CD8-positive, alpha-beta T cell (primary cell): ENCODE measurements at regions of chr4 and their contacts with region 1.

Region 1: GRCh38 chr4:103091601-103092223 is 7.9 kb downstream of the BDH2 start:
- DNase-seq: peak in 6 of 9 experiments; percentile 9 to 80 (median 47)
- ATAC-seq: peak; percentile 78
- H3K4me3 ChIP-seq: no peak overlapping the region
- H3K4me3 Mint-ChIP-seq: no peak overlapping the region
- H3K27ac ChIP-seq: no peak overlapping the region
- H3K27ac Mint-ChIP-seq: no peak overlapping the region
- H3K4me1 ChIP-seq: no peaks in the 10 kb centered on the region
- H3K4me1 Mint-ChIP-seq: peaks cover 18% of the 10 kb centered on the region
- H3K27me3 ChIP-seq: no peaks in the 10 kb centered on the region
- H3K27me3 Mint-ChIP-seq: no peaks in the 10 kb centered on the region
- CTCF ChIP-seq: peak; percentile 71

Region 2: GRCh38 chr4:102449751-102450352 is 641.9 kb before region 1 on chr4:
- CTCF ChIA-PET with region 1: interaction called, 7 read pairs
- POLR2A ChIA-PET with region 1: no interaction called
- intact Hi-C with region 1: loop called (anchors 5 kb)
- DNase-seq: peak; percentile 21 to 82 (median 48)
- ATAC-seq: peak; percentile 89
- H3K4me3 ChIP-seq: no peak overlapping the region
- H3K4me3 Mint-ChIP-seq: no peak overlapping the region
- H3K27ac ChIP-seq: no peak overlapping the region
- H3K27ac Mint-ChIP-seq: no peak overlapping the region
- H3K4me1 ChIP-seq: no peaks in the 10 kb centered on the region
- H3K4me1 Mint-ChIP-seq: peaks cover 10% of the 10 kb centered on the region
- H3K27me3 ChIP-seq: no peaks in the 10 kb centered on the region
- H3K27me3 Mint-ChIP-seq: no peaks in the 10 kb centered on the region
- CTCF ChIP-seq: peak; percentile 83

Region 3: GRCh38 chr4:103046416-103047290 is 45.1 kb before region 1 on chr4:
- CTCF ChIA-PET with region 1: interaction called, 58 read pairs
- POLR2A ChIA-PET with region 1: no interaction called
- intact Hi-C with region 1: loop called (anchors 1 kb)
- DNase-seq: peak in 7 of 9 experiments; percentile 2 to 71 (median 40)
- ATAC-seq: peak; percentile 98
- H3K4me3 ChIP-seq: no peak overlapping the region
- H3K4me3 Mint-ChIP-seq: no peak overlapping the region
- H3K27ac ChIP-seq: no peak overlapping the region
- H3K27ac Mint-ChIP-seq: no peak overlapping the region
- H3K4me1 ChIP-seq: no peaks in the 10 kb centered on the region
- H3K4me1 Mint-ChIP-seq: no peaks in the 10 kb centered on the region
- H3K27me3 ChIP-seq: no peaks in the 10 kb centered on the region
- H3K27me3 Mint-ChIP-seq: no peaks in the 10 kb centered on the region
- CTCF ChIP-seq: peak; percentile 80

Region 4: DNA sequence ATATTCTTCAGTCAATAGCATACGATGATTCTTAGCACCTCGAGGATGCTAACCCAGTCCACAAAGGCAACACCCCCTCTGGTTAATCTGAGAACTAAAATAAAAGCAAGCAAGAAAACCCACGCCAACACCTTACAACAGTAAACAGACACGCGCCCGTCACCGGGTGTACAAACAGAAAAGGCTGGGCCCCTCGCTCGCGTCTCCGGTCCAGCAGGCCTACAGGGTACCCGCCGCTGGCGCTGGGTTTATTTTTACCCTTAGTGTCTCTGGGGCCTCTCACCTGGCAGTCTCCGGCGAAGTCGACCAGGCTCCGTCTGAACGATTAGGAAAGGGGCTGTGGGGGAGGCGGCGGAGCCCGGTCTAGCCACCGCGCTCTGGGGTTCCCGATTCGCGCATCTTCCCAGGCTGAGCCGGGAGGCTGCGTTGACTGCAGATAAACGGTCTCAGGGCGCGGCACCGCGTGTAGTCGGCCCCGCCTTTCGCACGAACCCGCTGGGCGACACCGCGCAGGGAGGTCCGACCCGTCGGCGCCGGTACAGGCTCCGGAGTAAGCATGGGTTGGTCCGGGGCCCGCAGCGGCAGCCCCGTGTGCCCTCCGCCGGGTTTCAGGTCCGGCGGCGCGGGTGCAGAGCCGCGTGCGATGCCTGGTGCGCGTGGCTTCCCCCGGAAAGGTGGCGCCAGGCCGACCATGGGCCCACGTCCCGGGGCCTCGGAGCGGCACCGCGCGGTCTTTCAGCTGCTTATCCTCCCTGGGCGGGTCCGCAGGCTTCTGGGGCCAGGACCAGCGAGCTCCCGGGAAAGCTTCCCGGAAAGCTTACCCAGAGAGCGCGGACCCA is 15.6 kb before region 1 on chr4:
- CTCF ChIA-PET with region 1: interaction called, 16 read pairs
- POLR2A ChIA-PET with region 1: interaction called, 6 read pairs
- intact Hi-C with region 1: no loop called
- DNase-seq: peak; percentile 39 to 84 (median 64)
- ATAC-seq: peak; percentile 79
- H3K4me3 ChIP-seq: peak overlapping the region; percentile 80
- H3K4me3 Mint-ChIP-seq: peak overlapping the region; percentile 94
- H3K27ac ChIP-seq: peak overlapping the region; percentile 89 to 95
- H3K27ac Mint-ChIP-seq: peak overlapping the region; percentile 99
- H3K4me1 ChIP-seq: peaks cover 25% of the 10 kb centered on the region
- H3K4me1 Mint-ChIP-seq: peaks cover 49% of the 10 kb centered on the region
- H3K27me3 ChIP-seq: no peaks in the 10 kb centered on the region
- H3K27me3 Mint-ChIP-seq: no peaks in the 10 kb centered on the region
- CTCF ChIP-seq: no peak